H1 (cell line): ENCODE measurements at regions of chr2 and their contacts with region 1.

Region 1: GRCh38 chr2:189142893-189143759 is 36.4 kb downstream of the COL5A2 start:
- DNase-seq: peak; percentile 17 to 63
- H3K4me3 ChIP-seq: no peak overlapping the region
- H3K27ac ChIP-seq: no peak overlapping the region
- H3K4me1 ChIP-seq: peaks cover 0 to 2% (median 0%) of the 10 kb centered on the region in 4 experiments; a peak in 1 of 7 replicates
- H3K27me3 ChIP-seq: no peaks in the 10 kb centered on the region
- CTCF ChIP-seq: peak; percentile 32 to 100 (median 95)
- EP300 ChIP-seq: no peak
- POLR2A ChIP-seq: no peak
- RAD21 ChIP-seq: peak; percentile 74 to 86

Region 2: DNA sequence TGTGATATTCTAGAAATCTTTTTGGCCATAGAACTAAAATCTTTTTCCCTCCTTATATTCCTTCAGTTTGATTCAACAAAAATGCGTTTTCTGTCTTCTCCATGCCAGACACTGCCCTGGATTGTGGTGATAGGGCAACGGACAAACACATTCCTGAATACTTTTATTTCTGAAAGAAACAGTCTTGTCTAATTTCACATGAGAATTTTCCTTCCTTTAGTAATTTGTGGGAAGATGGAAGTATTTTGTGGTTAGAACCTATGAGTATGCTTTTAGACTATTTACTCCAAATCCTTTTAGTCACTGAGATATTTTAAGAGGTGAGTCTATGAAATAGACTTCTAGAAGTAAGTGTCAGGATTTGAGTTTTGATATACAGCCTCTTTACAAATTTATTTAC is 13.2 kb before region 1 on chr2:
- CTCF ChIA-PET with region 1: interaction called, 30 read pairs
- POLR2A ChIA-PET with region 1: no interaction called
- DNase-seq: no peak
- H3K4me3 ChIP-seq: no peak overlapping the region
- H3K27ac ChIP-seq: no peak overlapping the region
- H3K4me1 ChIP-seq: no peaks in the 10 kb centered on the region
- H3K27me3 ChIP-seq: no peaks in the 10 kb centered on the region
- CTCF ChIP-seq: no peak
- EP300 ChIP-seq: no peak
- POLR2A ChIP-seq: no peak
- RAD21 ChIP-seq: no peak

Region 3: DNA sequence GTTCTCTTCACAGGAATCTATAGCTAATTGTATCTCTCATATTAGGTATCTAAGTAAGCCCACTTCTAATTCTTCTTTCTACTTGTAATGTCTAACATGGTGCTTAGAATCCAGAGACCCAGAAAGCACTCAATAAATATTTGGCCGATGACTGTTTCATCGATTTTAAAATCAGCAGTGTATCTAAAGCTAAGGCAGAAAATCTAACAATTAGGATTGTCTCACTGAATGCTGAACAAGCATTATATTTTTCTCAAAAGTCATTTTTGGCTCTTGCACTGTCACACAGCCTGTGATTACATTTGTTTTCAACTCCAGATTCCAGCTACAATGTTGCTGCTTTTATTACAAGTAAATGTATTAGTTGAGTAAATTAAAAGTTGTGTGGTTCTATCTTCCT is 16.1 kb after region 1 on chr2:
- CTCF ChIA-PET with region 1: interaction called, 29 read pairs
- POLR2A ChIA-PET with region 1: no interaction called
- DNase-seq: no peak
- H3K4me3 ChIP-seq: no peak overlapping the region
- H3K27ac ChIP-seq: no peak overlapping the region
- H3K4me1 ChIP-seq: peaks cover 0 to 12% (median 2%) of the 10 kb centered on the region in 4 experiments; a peak in 2 of 7 replicates
- H3K27me3 ChIP-seq: no peaks in the 10 kb centered on the region
- CTCF ChIP-seq: no peak
- EP300 ChIP-seq: no peak
- POLR2A ChIP-seq: no peak
- RAD21 ChIP-seq: no peak

Region 4: DNA sequence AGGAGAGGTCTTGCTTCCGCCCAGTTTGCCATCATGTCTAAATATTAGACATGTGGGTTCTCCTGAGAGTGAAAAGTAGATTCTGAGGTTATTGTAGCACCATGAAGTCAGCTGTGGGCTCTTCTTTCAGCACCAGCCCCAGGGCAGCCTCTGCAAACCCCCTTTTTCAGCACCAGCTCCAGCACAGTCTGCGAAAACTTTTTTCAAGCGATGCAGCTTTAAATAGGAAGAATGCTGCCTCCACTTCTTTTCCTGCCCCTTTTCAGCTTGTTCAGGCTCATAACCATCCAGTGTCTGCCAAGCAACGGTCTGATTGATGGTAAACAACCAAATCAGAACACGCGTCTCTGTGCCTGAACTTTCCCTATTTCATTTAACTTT is 36.4 kb after region 1 on chr2 and contains the start of gene COL5A2:
- CTCF ChIA-PET with region 1: interaction called, 12 read pairs
- POLR2A ChIA-PET with region 1: no interaction called
- DNase-seq: no peak
- H3K4me3 ChIP-seq: peak within 1 kb of the TSS; percentile 46 to 71 (median 58)
- H3K27ac ChIP-seq: no peak within 1 kb of the TSS
- H3K4me1 ChIP-seq: no peaks in the 10 kb centered on the region; a peak in 3 of 7 replicates
- H3K27me3 ChIP-seq: no peaks in the 10 kb centered on the region
- CTCF ChIP-seq: no peak
- EP300 ChIP-seq: no peak
- POLR2A ChIP-seq: no peak
- RAD21 ChIP-seq: no peak
- total RNA-seq, gene COL5A2: 22.8 and 24.2 TPM in 2 replicates

Region 5: DNA sequence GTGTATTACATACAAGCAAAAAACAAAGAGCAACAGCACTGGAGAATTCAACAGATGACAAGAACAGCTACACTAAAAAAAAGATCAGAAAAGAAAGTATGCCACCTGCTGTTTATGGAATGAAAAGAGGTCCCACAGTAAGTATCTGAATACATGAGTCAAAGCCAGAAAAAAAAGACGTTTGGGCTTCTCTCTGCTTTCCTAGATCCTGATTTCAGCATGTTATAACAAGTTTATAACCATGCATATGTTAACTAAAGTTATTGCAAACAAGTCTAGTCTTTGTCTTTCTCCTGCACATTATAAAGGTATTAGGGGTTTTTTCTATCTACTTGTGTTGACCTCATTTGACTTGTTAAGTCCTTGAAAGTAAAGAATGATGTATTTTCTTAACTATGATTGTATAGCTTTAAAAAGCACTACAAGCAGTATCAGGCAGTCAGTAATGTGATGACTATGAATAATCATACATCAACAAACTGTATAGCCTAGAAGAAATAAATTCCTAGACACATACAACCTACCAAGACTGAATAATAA is 144.9 kb after region 1 on chr2:
- CTCF ChIA-PET with region 1: interaction called, 15 read pairs
- POLR2A ChIA-PET with region 1: no interaction called
- DNase-seq: no peak
- H3K4me3 ChIP-seq: no peak overlapping the region
- H3K27ac ChIP-seq: no peak overlapping the region
- H3K4me1 ChIP-seq: no peaks in the 10 kb centered on the region
- H3K27me3 ChIP-seq: no peaks in the 10 kb centered on the region
- CTCF ChIP-seq: peak in 2 of 3 experiments; percentile 41 to 50; a peak in 2 of 4 replicates
- EP300 ChIP-seq: no peak
- POLR2A ChIP-seq: no peak
- RAD21 ChIP-seq: peak; percentile 68 to 70

Region 6: GRCh38 chr2:189477756-189478155 is 334.6 kb after region 1 on chr2:
- CTCF ChIA-PET with region 1: no interaction called
- POLR2A ChIA-PET with region 1: no interaction called
- DNase-seq: no peak
- H3K4me3 ChIP-seq: no peak overlapping the region
- H3K27ac ChIP-seq: no peak overlapping the region
- H3K4me1 ChIP-seq: no peaks in the 10 kb centered on the region
- H3K27me3 ChIP-seq: no peaks in the 10 kb centered on the region
- CTCF ChIP-seq: no peak
- EP300 ChIP-seq: no peak
- POLR2A ChIP-seq: no peak
- RAD21 ChIP-seq: no peak